PC-3 (cell line): ENCODE measurements at regions of chr1 and their contacts with region 1.

Region 1: DNA sequence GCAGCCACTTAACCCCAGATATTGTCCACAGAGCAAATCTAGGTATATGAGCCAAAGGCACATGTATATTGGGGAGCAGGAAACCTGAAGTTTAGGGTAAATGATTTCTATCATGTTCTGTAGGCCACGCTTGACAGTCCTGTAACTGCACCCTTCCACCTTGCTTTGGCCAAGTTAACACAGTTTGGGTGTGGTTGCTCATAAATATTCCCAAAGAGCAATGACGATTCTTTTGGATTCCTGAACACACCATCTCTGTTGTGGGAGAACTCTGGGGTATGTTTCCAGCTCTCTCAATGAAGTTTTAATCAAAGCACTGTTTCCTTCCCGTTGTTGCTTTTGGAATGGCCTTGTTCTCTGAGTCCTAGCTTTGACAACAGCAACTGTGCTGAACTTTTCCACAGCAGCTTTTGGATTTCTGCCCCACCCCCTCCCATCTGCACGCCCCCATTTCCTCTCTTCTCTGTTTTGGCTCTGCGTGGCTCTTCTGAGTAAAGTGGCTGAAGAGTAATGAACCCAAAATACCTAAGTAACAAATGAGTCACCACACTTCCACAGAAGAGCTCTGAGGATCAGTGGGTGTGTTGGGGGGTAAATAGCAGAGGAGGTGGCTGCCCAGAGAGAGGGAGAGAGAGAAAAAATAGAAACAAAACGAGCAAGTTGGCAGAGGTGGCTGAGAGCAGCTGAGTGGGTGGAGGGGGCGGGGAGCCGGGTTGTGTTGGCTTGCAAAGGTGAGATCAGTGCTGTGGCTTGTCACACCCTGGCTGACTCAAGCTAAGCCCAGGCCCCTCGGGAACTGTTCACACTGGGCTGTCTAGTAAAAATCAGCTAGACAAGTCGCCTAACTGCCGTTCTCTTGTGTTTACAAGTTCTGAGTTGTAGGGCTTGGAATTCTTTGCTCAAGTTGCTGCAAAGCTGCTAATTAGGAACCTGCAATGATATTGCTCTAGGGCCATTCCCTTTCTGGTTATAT is 26.9 kb upstream of the RAP1A start:
- DNase-seq: peak; percentile 90
- ATAC-seq: peak; percentile 98
- H3K4me3 ChIP-seq: peak overlapping the region; percentile 46
- H3K27ac ChIP-seq: peak overlapping the region; percentile 73
- H3K4me1 ChIP-seq: peaks cover 25% of the 10 kb centered on the region
- H3K27me3 ChIP-seq: no peaks in the 10 kb centered on the region
- CTCF ChIP-seq: no peak

Region 2: DNA sequence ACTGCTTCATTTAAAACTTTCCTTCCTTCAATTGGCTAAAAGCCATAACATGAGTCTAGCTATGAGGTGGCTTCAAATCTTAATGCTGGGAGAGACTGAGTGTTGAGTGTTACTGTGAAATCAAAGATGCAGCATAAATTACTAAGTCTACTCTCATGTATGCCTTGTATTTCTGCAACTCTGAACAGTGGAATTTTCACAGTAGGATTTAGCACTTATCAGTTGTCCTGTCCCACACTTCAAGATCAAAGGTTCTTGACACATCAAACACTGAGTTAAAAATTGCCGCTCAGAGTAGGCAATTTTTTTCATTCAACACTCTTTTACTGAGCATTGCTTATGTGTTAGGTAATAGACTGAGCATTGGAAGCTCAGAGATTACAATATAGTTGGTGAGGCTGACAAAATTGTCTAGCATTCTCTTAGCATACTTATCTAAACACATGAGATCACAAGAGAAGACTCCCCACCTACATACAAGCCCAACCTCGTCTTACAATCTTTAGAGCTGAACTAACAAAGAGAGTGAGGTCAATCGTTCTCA is 32.9 kb before region 1 on chr1:
- CTCF ChIA-PET with region 1: interaction called, 15 read pairs
- POLR2A ChIA-PET with region 1: no interaction called
- intact Hi-C with region 1: no loop called
- DNase-seq: peak; percentile 43
- ATAC-seq: no peak
- H3K4me3 ChIP-seq: no peak overlapping the region
- H3K27ac ChIP-seq: no peak overlapping the region
- H3K4me1 ChIP-seq: peaks cover 13% of the 10 kb centered on the region
- H3K27me3 ChIP-seq: no peaks in the 10 kb centered on the region
- CTCF ChIP-seq: no peak

Region 3: DNA sequence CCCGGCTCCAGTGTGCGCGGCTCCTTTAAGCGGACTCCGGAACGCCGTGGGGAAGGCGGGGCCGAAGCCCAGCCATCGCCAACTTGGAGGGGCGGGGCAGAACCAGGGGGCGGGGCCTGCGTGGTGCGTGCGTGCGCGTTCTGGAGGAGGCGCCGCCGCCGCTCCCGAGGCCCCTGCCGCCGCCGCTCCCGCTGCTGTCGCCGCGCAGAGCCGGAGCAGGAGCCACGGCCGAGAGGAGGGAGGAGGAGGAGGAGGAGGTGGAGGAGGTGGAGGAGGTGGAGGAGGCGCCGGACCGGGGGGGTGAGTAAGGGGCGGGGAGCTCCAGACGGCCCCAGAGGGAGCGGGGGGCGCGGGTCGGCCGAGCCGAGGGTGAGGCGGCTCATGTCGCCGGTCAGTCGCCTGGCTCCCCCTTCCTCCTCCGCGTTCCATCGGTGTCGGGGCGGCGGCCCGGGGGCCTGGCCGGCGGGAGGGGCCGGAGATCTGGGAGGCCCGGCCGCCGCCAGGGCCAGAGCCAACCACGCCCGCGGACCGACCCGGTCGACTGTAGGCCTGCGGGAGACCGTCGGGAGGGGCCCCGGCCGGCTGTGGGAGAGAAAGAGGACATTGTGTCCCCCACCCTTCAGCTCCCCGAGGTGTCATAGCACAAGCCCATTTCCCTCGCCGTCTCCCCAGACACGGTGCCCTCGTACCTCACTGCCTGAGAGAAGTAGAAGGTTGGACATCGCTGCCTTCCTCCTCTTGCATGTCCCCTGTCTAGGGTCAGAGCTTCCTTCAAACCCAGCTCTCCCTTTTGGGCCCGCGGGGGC is 27.2 kb after region 1 on chr1 and contains the start of gene RAP1A:
- CTCF ChIA-PET with region 1: interaction called, 10 read pairs
- POLR2A ChIA-PET with region 1: no interaction called
- intact Hi-C with region 1: loop called (anchors 1 kb)
- DNase-seq: peak; percentile 92
- ATAC-seq: peak; percentile 89
- H3K4me3 ChIP-seq: peak within 1 kb of the TSS; percentile 94
- H3K27ac ChIP-seq: peak within 1 kb of the TSS; percentile 34
- H3K4me1 ChIP-seq: peaks cover 18% of the 10 kb centered on the region
- H3K27me3 ChIP-seq: no peaks in the 10 kb centered on the region
- CTCF ChIP-seq: no peak
- total RNA-seq, gene RAP1A: 19.0 TPM in 2 replicates

Region 4: GRCh38 chr1:111967064-111967690 is 374.5 kb after region 1 on chr1:
- CTCF ChIA-PET with region 1: no interaction called
- POLR2A ChIA-PET with region 1: no interaction called
- intact Hi-C with region 1: no loop called
- DNase-seq: no peak
- ATAC-seq: no peak
- H3K4me3 ChIP-seq: no peak overlapping the region
- H3K27ac ChIP-seq: no peak overlapping the region
- H3K4me1 ChIP-seq: no peaks in the 10 kb centered on the region
- H3K27me3 ChIP-seq: peaks cover 57% of the 10 kb centered on the region
- CTCF ChIP-seq: no peak